ENCODE measurements at regions of chr6 and their contacts with region 1.

Region 1: DNA sequence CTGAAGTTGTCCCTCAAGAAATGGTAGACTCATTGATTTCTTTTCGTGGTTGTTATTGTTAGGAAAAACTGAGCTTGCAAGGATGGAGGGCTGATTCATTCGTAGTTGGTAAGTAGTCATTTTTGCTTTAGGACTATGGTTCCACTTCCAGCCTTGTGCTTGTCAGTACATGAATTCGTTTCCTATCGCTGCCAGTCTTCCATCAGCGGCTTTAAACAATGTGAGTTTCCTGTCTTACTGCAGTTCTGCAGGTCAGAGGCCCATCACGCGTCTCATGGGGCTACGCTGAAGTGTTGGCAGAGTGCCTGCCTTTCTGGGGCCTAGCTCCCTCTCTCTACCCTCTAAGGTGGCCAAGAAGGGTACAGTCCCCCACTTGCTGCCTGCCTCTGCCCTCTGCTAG is 11.4 kb upstream of the MDFI start:
- DNase-seq: peak; percentile 69
- H3K4me3 ChIP-seq: no peak overlapping the region
- H3K27ac ChIP-seq: peak overlapping the region; percentile 73
- H3K4me1 ChIP-seq: peaks cover 26% of the 10 kb centered on the region
- H3K27me3 ChIP-seq: no peaks in the 10 kb centered on the region
- CTCF ChIP-seq: no peak

Region 2: GRCh38 chr6:41132254-41132653 is 494.7 kb before region 1 on chr6:
- CTCF ChIA-PET with region 1: no interaction called
- POLR2A ChIA-PET with region 1: no interaction called
- intact Hi-C with region 1: no loop called
- DNase-seq: no peak
- H3K4me3 ChIP-seq: no peak overlapping the region
- H3K27ac ChIP-seq: no peak overlapping the region
- H3K4me1 ChIP-seq: no peaks in the 10 kb centered on the region
- H3K27me3 ChIP-seq: no peaks in the 10 kb centered on the region
- CTCF ChIP-seq: no peak

Region 3: GRCh38 chr6:41655711-41656691 is 29.1 kb after region 1 on chr6:
- CTCF ChIA-PET with region 1: no interaction called
- POLR2A ChIA-PET with region 1: interaction called, 16 read pairs
- intact Hi-C with region 1: no loop called
- DNase-seq: no peak
- H3K4me3 ChIP-seq: no peak overlapping the region
- H3K27ac ChIP-seq: peak overlapping the region; percentile 68
- H3K4me1 ChIP-seq: peaks cover 8% of the 10 kb centered on the region
- H3K27me3 ChIP-seq: no peaks in the 10 kb centered on the region
- CTCF ChIP-seq: no peak

Region 4: GRCh38 chr6:41941280-41942066 is 314.6 kb after region 1 on chr6 and contains the start of gene CCND3:
- CTCF ChIA-PET with region 1: no interaction called
- POLR2A ChIA-PET with region 1: no interaction called
- intact Hi-C with region 1: no loop called
- DNase-seq: peak; percentile 94
- H3K4me3 ChIP-seq: peak within 1 kb of the TSS; percentile 74
- H3K27ac ChIP-seq: peak within 1 kb of the TSS; percentile 62
- H3K4me1 ChIP-seq: peaks cover 27% of the 10 kb centered on the region
- H3K27me3 ChIP-seq: no peaks in the 10 kb centered on the region
- CTCF ChIP-seq: no peak
- total RNA-seq, gene CCND3: 31.9 and 39.9 TPM in 2 replicates

Measured in A673 (cell line).